IMR-90 (cell line): ENCODE measurements at regions of chr13 and their contacts with region 1.

Region 1: DNA sequence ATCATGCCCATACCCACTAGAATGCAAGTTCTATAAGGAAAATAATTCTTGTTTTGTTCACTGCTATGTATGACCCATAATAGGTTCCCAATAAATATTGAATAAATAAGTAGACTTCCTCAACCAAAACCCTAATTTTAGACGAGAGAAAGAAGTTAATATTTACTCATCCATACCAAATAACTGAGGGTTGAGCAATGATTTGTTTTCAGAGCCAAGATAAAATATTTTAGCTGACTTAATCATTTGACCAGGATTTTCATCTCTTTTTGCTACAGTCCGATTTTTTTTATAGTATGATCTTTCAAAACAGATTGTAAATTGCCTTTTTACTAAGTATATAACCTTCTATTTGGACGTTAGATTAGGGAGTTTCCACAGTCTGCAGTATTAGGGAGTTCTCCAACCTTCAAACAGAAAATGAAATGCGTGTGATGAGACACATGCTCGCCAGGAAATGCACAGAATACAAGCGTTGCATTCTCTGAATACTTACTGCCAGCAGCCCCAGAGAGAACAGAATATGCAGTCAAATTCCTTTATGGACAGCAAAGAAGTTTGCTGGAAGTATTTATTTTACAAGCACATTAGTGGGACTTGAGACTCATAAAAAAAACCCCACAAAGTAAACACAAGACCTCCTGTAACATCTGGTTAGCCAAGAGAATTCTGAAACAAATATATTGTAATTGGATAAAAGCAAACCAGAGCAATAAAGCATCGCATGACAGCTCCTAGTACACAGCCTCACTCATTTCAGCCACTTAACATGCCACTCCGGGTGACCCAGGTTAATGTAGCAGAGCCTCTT is 230.0 kb downstream of the MYO16 start:
- DNase-seq: peak; percentile 92
- ATAC-seq: peak; percentile 90
- H3K4me3 ChIP-seq: peak overlapping the region; percentile 11; the same call in 1 of the 2 replicates
- H3K27ac ChIP-seq: peak overlapping the region; percentile 69; the same call in 1 of the 2 replicates
- H3K4me1 ChIP-seq: peaks cover 5% of the 10 kb centered on the region
- H3K27me3 ChIP-seq: no peaks in the 10 kb centered on the region
- CTCF ChIP-seq: no peak
- POLR2A ChIP-seq: no peak
- RAD21 ChIP-seq: no peak

Region 2: DNA sequence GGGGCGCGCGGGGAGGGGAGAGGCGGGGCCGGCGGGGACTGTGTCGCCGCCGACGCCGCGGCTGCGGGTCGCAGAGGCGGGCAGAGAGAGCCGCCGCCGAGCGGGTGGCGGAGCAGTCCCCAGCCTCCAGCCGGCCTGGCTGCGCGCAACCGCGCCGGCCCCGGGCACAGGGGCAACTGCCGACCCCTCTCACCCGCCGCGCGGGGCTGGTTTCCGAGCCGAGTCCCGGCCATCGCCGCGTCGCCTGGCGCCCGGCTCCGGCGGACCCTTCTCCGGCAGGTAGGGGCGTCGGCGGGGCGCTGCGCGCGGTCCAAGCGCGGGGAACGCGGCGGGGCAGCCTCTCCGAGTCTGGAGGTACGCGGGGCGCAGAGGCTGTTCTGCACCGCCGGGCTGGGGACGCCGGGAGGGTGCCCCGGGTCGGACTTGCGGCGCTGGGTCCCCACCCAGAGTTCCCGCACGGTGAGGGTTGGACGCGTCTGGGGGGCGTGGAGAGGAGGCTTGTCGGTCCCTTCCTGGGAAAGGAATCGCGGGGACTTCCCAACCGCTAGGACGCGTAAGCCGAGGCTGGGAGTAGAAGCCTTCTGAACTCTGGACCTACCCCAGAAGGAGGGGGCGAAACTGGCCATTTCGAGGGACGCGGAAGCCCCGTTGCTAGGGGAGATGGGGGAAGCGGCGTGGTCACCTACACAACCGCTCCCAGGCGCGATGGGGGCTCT is 363.6 kb before region 1 on chr13:
- CTCF ChIA-PET with region 1: no interaction called
- POLR2A ChIA-PET with region 1: no interaction called
- dilution Hi-C with region 1: no loop called
- in situ Hi-C with region 1: no loop called
- intact Hi-C with region 1: no loop called
- DNase-seq: no peak
- ATAC-seq: no peak
- H3K4me3 ChIP-seq: no peak overlapping the region
- H3K27ac ChIP-seq: no peak overlapping the region
- H3K4me1 ChIP-seq: no peaks in the 10 kb centered on the region
- H3K27me3 ChIP-seq: peaks cover 27% of the 10 kb centered on the region
- CTCF ChIP-seq: no peak
- POLR2A ChIP-seq: no peak
- RAD21 ChIP-seq: no peak

Region 3: GRCh38 chr13:108690726-108691125 is 168.7 kb before region 1 on chr13:
- CTCF ChIA-PET with region 1: no interaction called
- POLR2A ChIA-PET with region 1: no interaction called
- dilution Hi-C with region 1: no loop called
- in situ Hi-C with region 1: no loop called
- intact Hi-C with region 1: loop called (anchors 5 kb)
- DNase-seq: no peak
- ATAC-seq: no peak
- H3K4me3 ChIP-seq: no peak overlapping the region
- H3K27ac ChIP-seq: no peak overlapping the region
- H3K4me1 ChIP-seq: no peaks in the 10 kb centered on the region
- H3K27me3 ChIP-seq: no peaks in the 10 kb centered on the region
- CTCF ChIP-seq: no peak
- POLR2A ChIP-seq: no peak
- RAD21 ChIP-seq: no peak

Region 4: GRCh38 chr13:108769213-108770070 is 90.0 kb before region 1 on chr13:
- CTCF ChIA-PET with region 1: no interaction called
- POLR2A ChIA-PET with region 1: no interaction called
- dilution Hi-C with region 1: no loop called
- in situ Hi-C with region 1: no loop called
- intact Hi-C with region 1: no loop called
- DNase-seq: no peak
- ATAC-seq: no peak
- H3K4me3 ChIP-seq: no peak overlapping the region
- H3K27ac ChIP-seq: no peak overlapping the region
- H3K4me1 ChIP-seq: no peaks in the 10 kb centered on the region
- H3K27me3 ChIP-seq: no peaks in the 10 kb centered on the region
- CTCF ChIP-seq: no peak
- POLR2A ChIP-seq: no peak
- RAD21 ChIP-seq: no peak

Region 5: GRCh38 chr13:108795841-108796240 is 63.6 kb before region 1 on chr13:
- CTCF ChIA-PET with region 1: no interaction called
- POLR2A ChIA-PET with region 1: no interaction called
- dilution Hi-C with region 1: no loop called
- in situ Hi-C with region 1: no loop called
- intact Hi-C with region 1: no loop called
- DNase-seq: peak; percentile 12
- ATAC-seq: no peak
- H3K4me3 ChIP-seq: no peak overlapping the region
- H3K27ac ChIP-seq: no peak overlapping the region
- H3K4me1 ChIP-seq: no peaks in the 10 kb centered on the region
- H3K27me3 ChIP-seq: no peaks in the 10 kb centered on the region
- CTCF ChIP-seq: no peak
- POLR2A ChIP-seq: no peak
- RAD21 ChIP-seq: no peak